ENCODE measurements at regions of chr2 and their contacts with region 1.

Region 1: GRCh38 chr2:7097348-7097895 is 180.2 kb downstream of the RNF144A start:
- DNase-seq: peak; percentile 65 to 72 (median 66)
- H3K4me3 ChIP-seq: peak overlapping the region in 1 of 2 donors; percentile 24
- H3K4me3 Mint-ChIP-seq: peak overlapping the region; percentile 69 to 87 (median 77)
- H3K27ac ChIP-seq: no peak overlapping the region
- H3K27ac Mint-ChIP-seq: peak overlapping the region in 5 of 7 donors; percentile 9 to 64 (median 26)
- H3K4me1 ChIP-seq: peaks cover 9% of the 10 kb centered on the region
- H3K4me1 Mint-ChIP-seq: peaks cover 3 to 9% (median 5%) of the 10 kb centered on the region in 4 donors
- H3K27me3 ChIP-seq: no peaks in the 10 kb centered on the region
- H3K27me3 Mint-ChIP-seq: peaks cover 0 to 1% of the 10 kb centered on the region in 2 donors

Region 2: GRCh38 chr2:6877402-6878304 is 219.8 kb before region 1 on chr2 and contains the start of gene RSAD2:
- CTCF ChIA-PET with region 1: no interaction called
- POLR2A ChIA-PET with region 1: no interaction called
- intact Hi-C with region 1: no loop called
- DNase-seq: peak; percentile 52 to 61 (median 56)
- H3K4me3 ChIP-seq: peak within 1 kb of the TSS; percentile 52 to 67
- H3K4me3 Mint-ChIP-seq: peak within 1 kb of the TSS; percentile 85 to 93 (median 90)
- H3K27ac ChIP-seq: peak within 1 kb of the TSS; percentile 59
- H3K27ac Mint-ChIP-seq: peak within 1 kb of the TSS; percentile 82 to 93 (median 90)
- H3K4me1 ChIP-seq: peaks cover 54% of the 10 kb centered on the region
- H3K4me1 Mint-ChIP-seq: peaks cover 41 to 57% (median 46%) of the 10 kb centered on the region in 4 donors
- H3K27me3 ChIP-seq: no peaks in the 10 kb centered on the region
- H3K27me3 Mint-ChIP-seq: no peaks in the 10 kb centered on the region
- total RNA-seq, gene RSAD2: 3.8 to 4.9 TPM

Region 3: GRCh38 chr2:7057865-7058400 is 39.5 kb before region 1 on chr2:
- CTCF ChIA-PET with region 1: interaction called, 20 read pairs
- POLR2A ChIA-PET with region 1: no interaction called
- intact Hi-C with region 1: no loop called
- DNase-seq: peak in 4 of 5 donors; percentile 38 to 54 (median 40)
- H3K4me3 ChIP-seq: peak overlapping the region in 1 of 2 donors; percentile 39
- H3K4me3 Mint-ChIP-seq: peak overlapping the region; percentile 63 to 88 (median 82)
- H3K27ac ChIP-seq: peak overlapping the region; percentile 24
- H3K27ac Mint-ChIP-seq: peak overlapping the region in 6 of 7 donors; percentile 86 to 95 (median 92)
- H3K4me1 ChIP-seq: peaks cover 46% of the 10 kb centered on the region
- H3K4me1 Mint-ChIP-seq: peaks cover 0 to 31% (median 26%) of the 10 kb centered on the region in 4 donors
- H3K27me3 ChIP-seq: no peaks in the 10 kb centered on the region
- H3K27me3 Mint-ChIP-seq: no peaks in the 10 kb centered on the region

Region 4: DNA sequence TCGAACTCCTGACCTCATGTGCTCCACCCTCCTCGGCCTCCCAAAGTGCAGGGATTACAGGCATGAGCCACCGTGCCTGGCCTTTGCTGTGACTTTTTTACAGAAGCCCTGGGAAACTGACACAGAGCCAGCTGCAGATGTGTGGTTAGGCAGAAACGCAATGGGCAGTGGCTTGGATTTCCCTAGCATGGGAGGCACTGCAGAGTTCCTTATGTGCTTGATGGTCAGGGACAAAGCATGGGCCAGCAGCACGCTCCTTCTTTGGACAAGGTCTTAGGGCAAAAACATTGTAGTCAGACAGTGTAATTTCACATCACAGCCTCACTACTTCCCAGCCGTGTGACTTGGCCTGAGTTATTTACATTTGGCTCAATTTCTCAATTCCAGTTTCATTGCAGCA is 26.3 kb before region 1 on chr2:
- CTCF ChIA-PET with region 1: interaction called, 13 read pairs
- POLR2A ChIA-PET with region 1: no interaction called
- intact Hi-C with region 1: no loop called
- DNase-seq: no peak
- H3K4me3 ChIP-seq: no peak overlapping the region
- H3K4me3 Mint-ChIP-seq: no peak overlapping the region
- H3K27ac ChIP-seq: no peak overlapping the region
- H3K27ac Mint-ChIP-seq: no peak overlapping the region
- H3K4me1 ChIP-seq: no peaks in the 10 kb centered on the region
- H3K4me1 Mint-ChIP-seq: peaks cover 0 to 5% (median under 1%) of the 10 kb centered on the region in 4 donors
- H3K27me3 ChIP-seq: no peaks in the 10 kb centered on the region
- H3K27me3 Mint-ChIP-seq: no peaks in the 10 kb centered on the region

Region 5: GRCh38 chr2:8761529-8762164 is 1664.2 kb after region 1 on chr2:
- CTCF ChIA-PET with region 1: no interaction called
- POLR2A ChIA-PET with region 1: no interaction called
- intact Hi-C with region 1: loop called (anchors 2 kb)
- DNase-seq: peak in 3 of 5 donors; percentile 3 to 7 (median 6)
- H3K4me3 ChIP-seq: no peak overlapping the region
- H3K4me3 Mint-ChIP-seq: no peak overlapping the region
- H3K27ac ChIP-seq: no peak overlapping the region
- H3K27ac Mint-ChIP-seq: no peak overlapping the region
- H3K4me1 ChIP-seq: no peaks in the 10 kb centered on the region
- H3K4me1 Mint-ChIP-seq: no peaks in the 10 kb centered on the region
- H3K27me3 ChIP-seq: no peaks in the 10 kb centered on the region
- H3K27me3 Mint-ChIP-seq: no peaks in the 10 kb centered on the region

Measured in CD4-positive, alpha-beta memory T cell (primary cell).